Activated CD4-positive, alpha-beta T cell treated with anti-CD3 and anti-CD28 coated beads for 36 hours (primary cell): ENCODE measurements at regions of chr18 and their contacts with region 1.

Region 1: DNA sequence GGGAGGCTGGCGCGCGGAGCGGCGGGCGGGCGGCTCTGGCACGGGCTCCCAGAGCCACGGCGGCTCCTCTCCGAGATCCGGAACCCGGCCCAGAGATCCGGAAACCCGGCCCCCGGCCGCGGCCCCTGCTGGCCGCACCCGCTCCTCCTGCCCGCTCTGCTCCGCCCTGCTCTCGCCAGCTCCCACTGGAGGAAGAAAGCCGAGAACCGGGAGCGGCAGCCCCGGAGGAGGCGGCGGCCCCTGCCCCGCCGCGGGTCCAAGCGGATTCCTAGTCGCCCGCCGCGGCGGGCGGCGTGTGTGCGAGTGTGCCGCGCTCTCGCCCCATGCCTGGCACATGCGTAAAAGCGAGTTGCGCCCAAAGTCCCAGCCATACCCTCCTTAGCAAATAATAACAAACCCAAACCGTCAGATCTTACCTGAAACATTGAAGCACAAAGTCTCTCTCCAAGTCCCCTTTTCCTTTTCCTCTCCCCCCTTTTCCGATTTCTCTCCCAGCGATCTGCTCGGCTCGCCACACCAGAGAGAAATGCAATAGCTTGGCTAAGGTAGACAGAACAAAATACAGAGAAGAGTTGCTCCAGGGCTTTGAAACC is 108.7 kb upstream of the KCTD1 start:
- DNase-seq: peak; percentile 32
- ATAC-seq: peak; percentile 16
- H3K4me3 Mint-ChIP-seq: peak overlapping the region; percentile 69
- H3K27ac Mint-ChIP-seq: no peak overlapping the region
- H3K4me1 Mint-ChIP-seq: peaks cover 12% of the 10 kb centered on the region
- H3K27me3 Mint-ChIP-seq: peaks cover 66% of the 10 kb centered on the region

Region 2: DNA sequence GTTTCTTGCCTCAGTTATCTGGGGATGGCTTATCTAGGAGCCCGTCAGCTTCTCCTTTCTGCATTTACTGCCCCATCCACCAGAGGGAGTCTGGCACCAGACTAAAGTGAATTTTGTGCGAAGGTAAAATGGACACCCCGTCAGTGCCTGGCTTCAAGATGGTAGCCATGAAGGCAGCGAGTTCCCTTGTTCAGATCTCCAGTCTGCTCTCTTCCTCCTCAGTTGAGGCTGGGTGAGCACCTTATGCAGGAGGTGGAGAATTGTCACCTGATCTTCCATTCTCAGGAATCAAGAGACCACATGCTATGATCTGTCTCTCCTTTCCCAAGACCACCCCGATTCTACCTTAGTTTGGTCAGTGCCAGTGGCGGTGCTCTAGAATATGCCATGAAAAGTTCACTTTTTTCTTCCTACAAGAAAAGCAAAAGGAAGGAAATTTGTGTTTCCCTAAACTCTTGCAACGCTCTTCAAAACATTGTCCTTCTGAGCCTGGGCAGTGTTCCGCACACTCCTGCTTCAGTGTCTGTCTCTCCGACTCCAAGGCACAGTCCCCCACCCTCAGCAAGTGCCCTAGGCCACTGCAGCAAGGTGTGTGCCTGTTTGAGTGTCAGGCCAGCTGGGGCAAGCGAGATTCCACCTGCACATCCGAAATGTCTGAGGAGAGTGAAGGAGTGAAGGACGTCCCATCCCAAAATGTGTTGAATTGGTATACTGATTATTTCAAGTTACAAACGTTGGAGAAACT is 735.2 kb before region 1 on chr18:
- CTCF ChIA-PET with region 1: no interaction called
- POLR2A ChIA-PET with region 1: no interaction called
- intact Hi-C with region 1: loop called in 1 of 2 experiments (anchors 5 kb)
- DNase-seq: peak; percentile 65
- ATAC-seq: peak; percentile 64
- H3K4me3 Mint-ChIP-seq: no peak overlapping the region
- H3K27ac Mint-ChIP-seq: no peak overlapping the region
- H3K4me1 Mint-ChIP-seq: no peaks in the 10 kb centered on the region
- H3K27me3 Mint-ChIP-seq: peaks cover 3% of the 10 kb centered on the region

Region 3: DNA sequence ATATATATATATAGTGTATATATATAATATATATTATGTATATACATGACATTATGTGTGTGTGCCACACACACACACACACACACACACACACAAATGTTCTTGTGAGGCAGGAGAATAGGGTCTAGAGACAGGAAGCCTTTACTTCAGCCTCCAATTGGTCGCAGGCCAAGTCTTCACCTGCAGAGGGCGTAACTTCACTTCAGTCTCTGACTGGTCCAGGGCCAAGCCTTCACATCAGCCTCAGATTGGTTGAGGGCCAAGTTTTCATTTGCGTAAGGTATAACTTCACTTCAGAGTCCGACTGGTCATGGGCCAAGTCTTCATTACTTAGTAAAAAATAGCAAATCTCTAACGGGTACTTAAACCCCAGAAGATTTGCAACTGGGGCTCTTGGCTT is 553.5 kb before region 1 on chr18:
- CTCF ChIA-PET with region 1: no interaction called
- POLR2A ChIA-PET with region 1: no interaction called
- intact Hi-C with region 1: loop called in 1 of 2 experiments (anchors 10 kb)
- DNase-seq: peak; percentile 71
- ATAC-seq: peak; percentile 72
- H3K4me3 Mint-ChIP-seq: no peak overlapping the region
- H3K27ac Mint-ChIP-seq: no peak overlapping the region
- H3K4me1 Mint-ChIP-seq: no peaks in the 10 kb centered on the region
- H3K27me3 Mint-ChIP-seq: no peaks in the 10 kb centered on the region

Region 4: DNA sequence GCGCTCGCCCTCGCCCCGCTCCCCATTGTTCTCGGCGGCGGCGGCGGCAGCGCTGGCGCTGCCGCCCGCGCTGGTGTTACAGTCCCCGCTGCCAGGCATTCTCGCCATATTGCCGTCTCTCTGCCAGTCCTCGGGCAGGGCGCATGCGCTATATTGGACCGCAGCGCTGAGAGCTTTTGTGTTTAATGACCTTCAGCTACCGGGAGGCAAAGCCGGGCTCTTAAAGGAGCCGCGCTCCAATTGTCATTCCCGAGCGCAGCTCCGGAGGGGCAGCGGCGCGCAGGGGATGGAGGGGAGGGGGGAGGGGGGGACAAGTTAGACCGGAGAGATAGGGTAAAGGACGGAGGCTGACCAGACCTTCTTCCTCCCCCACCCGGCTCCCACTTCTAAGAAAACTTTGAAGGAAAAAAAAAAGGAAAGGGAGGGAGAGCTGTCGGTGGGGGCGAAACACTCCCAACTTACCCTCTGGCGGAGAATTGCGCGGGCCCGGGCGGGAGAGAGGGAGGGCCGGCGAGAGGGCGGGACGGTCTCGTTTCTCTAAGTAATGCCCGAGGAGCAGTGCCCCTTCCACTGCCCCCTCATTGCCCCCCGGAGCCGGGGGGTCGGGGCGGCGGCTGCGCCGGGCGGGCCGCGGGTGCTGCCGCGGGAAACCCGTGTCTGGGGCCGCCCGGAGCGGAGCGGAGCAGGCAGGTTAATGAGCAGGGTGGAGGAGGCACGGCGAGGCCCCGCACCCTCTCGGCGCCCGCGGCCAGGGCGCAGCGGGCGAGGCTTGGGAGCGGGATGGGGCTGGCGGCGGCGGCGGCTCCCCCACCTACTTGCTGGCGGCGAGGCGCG is 108.4 kb before region 1 on chr18 and contains the start of gene KCTD1:
- CTCF ChIA-PET with region 1: no interaction called
- POLR2A ChIA-PET with region 1: no interaction called
- intact Hi-C with region 1: loop called (anchors 2 to 5 kb)
- DNase-seq: peak; percentile 87
- ATAC-seq: peak; percentile 80
- H3K4me3 Mint-ChIP-seq: peak within 1 kb of the TSS; percentile 73
- H3K27ac Mint-ChIP-seq: no peak within 1 kb of the TSS
- H3K4me1 Mint-ChIP-seq: peaks cover 28% of the 10 kb centered on the region
- H3K27me3 Mint-ChIP-seq: peaks cover 38% of the 10 kb centered on the region
- total RNA-seq, gene KCTD1: 3.2 to 4.2 TPM

Region 5: DNA sequence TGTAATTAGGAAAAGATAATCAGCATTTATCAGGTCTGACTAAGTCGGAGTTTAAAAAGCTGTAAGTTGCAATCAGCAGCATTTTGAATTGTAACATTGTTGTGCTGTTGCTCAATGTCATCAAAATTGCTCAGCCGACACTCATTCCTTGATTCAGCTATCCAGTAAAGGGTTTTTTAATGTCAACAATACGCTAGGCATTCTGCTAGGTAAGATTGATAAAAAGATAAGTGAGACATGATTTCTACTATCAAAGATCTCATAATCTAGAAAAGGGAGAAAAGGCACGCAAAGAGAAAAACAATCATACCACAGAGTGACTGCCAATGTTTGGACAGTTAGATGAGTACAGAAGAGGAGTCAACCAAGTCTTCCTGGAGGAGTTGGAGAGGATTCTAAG is 1847.1 kb after region 1 on chr18:
- CTCF ChIA-PET with region 1: no interaction called
- POLR2A ChIA-PET with region 1: no interaction called
- intact Hi-C with region 1: no loop called
- DNase-seq: no peak
- ATAC-seq: no peak
- H3K4me3 Mint-ChIP-seq: no peak overlapping the region
- H3K27ac Mint-ChIP-seq: no peak overlapping the region
- H3K4me1 Mint-ChIP-seq: no peaks in the 10 kb centered on the region
- H3K27me3 Mint-ChIP-seq: no peaks in the 10 kb centered on the region